Left cardiac atrium (tissue), 4 donors: ENCODE measurements at regions of chrX and their contacts with region 1.

Region 1: GRCh38 chrX:39907964-39908616 is 189.7 kb downstream of the BCOR start:
- DNase-seq: peak; percentile 58
- ATAC-seq: peak; percentile 77 to 89

Region 2: DNA sequence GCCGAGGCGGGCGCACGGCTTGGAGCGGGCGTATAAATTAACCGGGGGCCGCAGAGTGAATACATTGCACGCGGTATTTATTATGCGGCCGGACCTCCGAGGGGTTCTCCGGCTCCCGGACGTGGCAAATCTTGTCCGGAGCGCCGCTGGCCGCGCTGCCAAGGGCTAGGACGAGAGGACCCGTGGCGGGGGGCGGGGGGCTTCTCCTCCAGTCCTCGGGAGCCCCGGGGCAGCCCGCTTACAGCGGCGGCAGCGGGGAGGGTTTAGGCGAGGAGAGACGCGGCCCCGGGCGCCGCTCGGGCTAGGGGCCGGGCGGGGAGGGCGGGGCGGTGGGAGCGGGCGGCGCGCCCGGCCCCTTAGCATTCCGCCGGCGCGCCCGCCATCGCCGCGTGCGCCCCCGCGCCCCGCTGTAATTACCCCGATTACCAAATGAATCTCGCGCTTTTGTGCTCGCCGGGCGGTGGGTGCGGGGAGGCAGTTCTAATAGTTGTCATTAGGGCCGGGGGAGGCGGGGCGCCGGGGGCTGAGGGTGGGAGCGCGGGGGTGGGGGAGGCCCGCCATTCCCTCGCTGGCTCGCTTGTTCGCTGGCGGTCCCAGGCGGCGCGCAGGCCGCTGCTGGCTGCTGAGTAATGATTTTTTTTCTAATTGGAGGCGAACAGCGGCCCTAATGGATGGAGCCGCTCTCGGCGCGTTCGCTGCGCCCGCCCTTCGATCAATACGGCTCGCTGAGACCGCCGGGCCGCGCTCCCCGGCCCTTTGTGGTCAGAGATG is 87.0 kb before region 1 on chrX:
- intact Hi-C with region 1: loop called in 1 of 2 experiments (anchors 10 kb)
- DNase-seq: peak; percentile 43
- ATAC-seq: peak; percentile 58 to 70

Region 3: GRCh38 chrX:39886282-39886681 is 21.8 kb before region 1 on chrX:
- intact Hi-C with region 1: no loop called
- DNase-seq: no peak
- ATAC-seq: peak; percentile 66 to 69